Mammary epithelial cell (primary cell): ENCODE measurements at regions of chr1 and their contacts with region 1.

Region 1: GRCh38 chr1:16146279-16147155 is 9.4 kb downstream of the EPHA2 start:
- DNase-seq: peak; percentile 72
- H3K4me3 ChIP-seq: peak overlapping the region; percentile 10 to 35 (median 11)
- H3K27ac ChIP-seq: peak overlapping the region; percentile 66
- H3K4me1 ChIP-seq: peaks cover 91% of the 10 kb centered on the region
- H3K27me3 ChIP-seq: no peaks in the 10 kb centered on the region
- CTCF ChIP-seq: no peak

Region 2: DNA sequence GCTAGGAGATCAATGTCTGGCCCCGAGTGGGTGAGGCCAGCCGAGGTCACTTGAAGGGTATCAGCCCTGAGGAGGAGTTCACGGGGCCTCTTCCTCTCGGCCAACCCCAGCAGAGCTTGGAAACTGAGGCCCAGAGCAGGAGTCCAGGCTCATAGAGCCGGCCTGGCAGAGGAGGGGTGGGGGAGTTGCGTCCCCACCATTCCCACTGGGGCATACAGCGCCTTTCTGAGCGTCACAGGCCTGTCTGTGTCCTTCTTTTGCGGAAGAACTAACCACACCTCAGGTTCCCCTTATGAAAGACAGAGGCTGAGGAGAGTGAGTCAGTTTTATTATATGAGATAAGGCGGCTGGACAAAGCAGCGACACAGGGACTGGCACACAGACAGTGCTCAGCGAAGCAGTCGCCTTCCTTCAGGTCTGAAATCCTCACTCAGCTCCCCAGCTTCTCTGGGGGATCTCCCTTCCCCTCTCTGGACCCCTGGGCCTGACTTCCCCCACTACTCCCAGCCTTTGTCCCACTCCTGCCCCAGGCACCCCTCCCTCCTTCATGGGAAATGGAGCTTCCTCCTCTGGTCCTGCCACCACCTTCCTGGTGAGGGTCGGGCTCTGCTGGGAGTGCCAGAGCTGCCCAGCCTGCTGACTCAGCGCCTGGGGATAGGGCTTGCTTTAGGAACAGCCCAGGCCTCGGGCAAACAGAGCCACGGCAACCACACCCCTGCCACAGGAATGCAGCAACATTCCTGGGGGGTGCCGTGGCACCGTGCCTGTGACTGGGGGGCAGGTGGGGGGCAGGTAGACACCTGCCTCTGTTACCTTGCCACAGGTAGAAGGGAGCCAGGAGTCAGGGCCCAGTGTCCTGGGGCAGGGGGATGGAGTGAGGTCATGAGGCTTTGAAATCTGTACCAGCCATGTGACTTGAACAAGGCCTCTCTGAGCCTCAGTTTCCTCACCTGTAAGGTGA is 26.8 kb after region 1 on chr1:
- CTCF ChIA-PET with region 1: no interaction called
- dilution Hi-C with region 1: no loop called
- in situ Hi-C with region 1: no loop called
- intact Hi-C with region 1: loop called (anchors 1 kb)
- DNase-seq: peak; percentile 97
- H3K4me3 ChIP-seq: no peak overlapping the region
- H3K27ac ChIP-seq: peak overlapping the region; percentile 97
- H3K4me1 ChIP-seq: peaks cover 52% of the 10 kb centered on the region
- H3K27me3 ChIP-seq: no peaks in the 10 kb centered on the region
- CTCF ChIP-seq: no peak

Region 3: DNA sequence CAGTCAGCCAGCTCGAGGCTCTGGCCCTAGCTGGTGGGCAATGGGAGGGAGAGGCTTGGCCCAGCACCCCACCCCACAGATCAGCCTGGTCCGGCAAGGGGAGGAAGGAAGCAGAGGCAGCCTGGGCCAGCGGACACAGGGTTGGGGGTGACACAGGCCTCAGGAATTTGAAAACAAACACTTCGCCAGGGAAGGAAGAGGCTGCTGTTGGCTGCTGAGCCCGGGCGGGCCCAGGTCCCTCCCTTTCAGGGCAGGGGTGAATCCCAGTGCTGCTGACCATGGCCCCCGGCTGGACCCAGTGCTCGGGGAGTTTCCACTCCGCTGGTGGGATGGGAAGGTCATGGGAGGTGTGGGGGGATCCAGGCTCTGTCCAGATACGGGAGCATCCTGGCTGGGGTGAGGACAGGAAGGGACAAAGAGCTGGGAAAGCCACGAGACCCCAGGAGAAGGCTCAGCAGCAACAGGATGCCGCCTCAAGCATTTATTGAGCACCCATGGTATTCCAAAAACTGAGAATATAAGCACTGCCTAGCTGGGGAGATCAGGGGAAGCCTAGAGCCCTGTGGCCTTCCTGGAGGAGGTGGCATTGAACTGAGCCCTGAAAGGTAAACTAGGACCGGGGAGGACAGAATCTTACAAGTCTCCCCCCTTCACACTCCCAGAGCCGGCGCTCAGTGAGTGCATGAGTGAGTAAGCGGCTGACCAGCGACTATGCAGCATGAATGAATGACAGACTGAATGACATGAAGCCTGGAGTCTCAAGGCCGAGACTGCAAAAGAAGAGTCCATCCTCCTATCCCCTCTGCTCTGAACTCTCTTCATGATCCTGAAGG is 35.6 kb after region 1 on chr1:
- CTCF ChIA-PET with region 1: no interaction called
- dilution Hi-C with region 1: no loop called
- in situ Hi-C with region 1: loop called (anchors 5 kb)
- intact Hi-C with region 1: loop called (anchors 1 kb)
- DNase-seq: peak; percentile 85
- H3K4me3 ChIP-seq: no peak overlapping the region
- H3K27ac ChIP-seq: peak overlapping the region; percentile 84
- H3K4me1 ChIP-seq: peaks cover 50% of the 10 kb centered on the region
- H3K27me3 ChIP-seq: no peaks in the 10 kb centered on the region
- CTCF ChIP-seq: no peak

Region 4: DNA sequence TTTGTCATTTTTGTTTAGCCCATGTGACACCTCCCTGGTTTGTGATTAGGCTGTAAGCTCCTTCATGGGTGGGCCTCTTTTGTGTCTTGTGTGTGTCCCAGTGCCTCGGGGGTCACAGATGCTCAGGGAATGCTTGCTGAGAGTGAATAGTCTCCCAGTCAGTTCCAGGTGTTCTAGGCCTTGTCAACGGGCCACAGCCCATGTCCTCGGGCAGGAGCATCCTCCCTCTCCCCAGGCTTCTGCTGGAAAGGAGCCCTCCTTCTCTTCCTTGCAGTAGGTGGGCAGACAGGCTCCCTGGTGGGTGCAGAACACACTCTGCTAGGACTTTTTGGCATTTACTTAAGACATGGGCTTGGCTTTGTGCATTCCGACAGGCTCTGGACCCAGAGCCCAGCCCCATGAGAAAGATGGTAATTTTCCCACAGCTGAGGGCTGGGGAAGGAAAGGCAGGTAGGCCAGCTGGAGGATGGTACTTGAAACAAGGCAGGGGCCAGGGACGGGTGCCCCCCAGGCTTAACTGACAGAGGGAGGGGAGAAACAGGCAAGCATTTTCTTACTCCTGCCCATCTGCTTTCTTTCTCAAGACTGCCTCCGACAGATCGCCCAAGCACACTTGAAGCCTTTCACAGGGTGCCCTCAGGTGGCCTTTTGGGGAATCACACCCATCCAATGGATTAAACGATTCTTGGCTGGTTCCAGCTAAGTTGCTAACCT is 97.6 kb after region 1 on chr1:
- CTCF ChIA-PET with region 1: no interaction called
- dilution Hi-C with region 1: no loop called
- in situ Hi-C with region 1: no loop called
- intact Hi-C with region 1: loop called (anchors 5 kb)
- DNase-seq: peak; percentile 66
- H3K4me3 ChIP-seq: no peak overlapping the region
- H3K27ac ChIP-seq: no peak overlapping the region
- H3K4me1 ChIP-seq: peaks cover 12% of the 10 kb centered on the region
- H3K27me3 ChIP-seq: no peaks in the 10 kb centered on the region
- CTCF ChIP-seq: peak; percentile 86